ENCODE measurements at regions of chr1 and their contacts with region 1.

Region 1: GRCh38 chr1:59718064-59718988 is 96.4 kb upstream of the HOOK1 start:
- DNase-seq: no peak
- ATAC-seq: peak; percentile 76

Region 2: DNA sequence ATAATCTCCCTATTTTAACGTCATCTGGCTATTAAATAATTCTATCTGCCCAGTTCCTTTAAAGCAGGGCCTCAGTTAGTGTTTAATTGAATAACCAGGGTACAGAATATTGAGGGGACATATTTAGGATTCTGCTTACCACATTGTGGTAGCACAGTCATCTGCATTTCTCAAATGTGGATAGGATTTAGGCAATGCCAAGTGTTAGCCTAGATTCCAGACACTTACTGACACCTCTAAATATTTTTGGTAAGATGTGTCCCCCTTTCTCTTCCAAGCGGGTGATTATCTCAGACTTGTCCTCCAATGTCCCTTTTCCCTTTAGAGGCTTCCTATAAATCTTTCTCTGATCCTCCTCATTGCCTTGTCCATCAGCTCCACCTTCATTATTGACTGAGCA is 64.4 kb before region 1 on chr1:
- intact Hi-C with region 1: no loop called
- DNase-seq: no peak
- ATAC-seq: no peak

Region 3: GRCh38 chr1:59743324-59744091 is 25.2 kb after region 1 on chr1:
- intact Hi-C with region 1: loop called (anchors 2 kb)
- DNase-seq: no peak
- ATAC-seq: peak; percentile 89

Region 4: DNA sequence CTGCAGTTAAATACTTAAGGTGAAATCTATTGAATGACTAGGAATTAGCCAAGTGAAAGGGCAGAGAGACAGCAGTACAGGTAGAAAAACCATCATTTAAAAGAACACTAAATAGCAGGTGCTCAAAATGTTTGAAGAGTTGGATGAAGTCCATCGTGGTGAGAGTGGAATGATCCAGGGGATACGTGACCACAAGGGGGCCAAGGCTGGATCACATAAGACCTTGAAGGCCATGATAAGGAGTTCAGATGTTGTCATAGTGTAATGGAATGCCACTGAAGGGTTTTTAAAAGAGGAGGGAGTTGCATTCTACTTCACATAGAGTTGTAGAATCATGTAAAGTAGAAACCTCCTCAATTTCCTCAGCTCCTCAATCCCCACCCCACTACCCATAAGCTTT is 61.6 kb after region 1 on chr1:
- intact Hi-C with region 1: no loop called
- DNase-seq: no peak
- ATAC-seq: no peak

Measured in Right ventricle myocardium inferior (tissue), 1 donor.